ENCODE measurements at regions of chr2 and their contacts with region 1.

Region 1: DNA sequence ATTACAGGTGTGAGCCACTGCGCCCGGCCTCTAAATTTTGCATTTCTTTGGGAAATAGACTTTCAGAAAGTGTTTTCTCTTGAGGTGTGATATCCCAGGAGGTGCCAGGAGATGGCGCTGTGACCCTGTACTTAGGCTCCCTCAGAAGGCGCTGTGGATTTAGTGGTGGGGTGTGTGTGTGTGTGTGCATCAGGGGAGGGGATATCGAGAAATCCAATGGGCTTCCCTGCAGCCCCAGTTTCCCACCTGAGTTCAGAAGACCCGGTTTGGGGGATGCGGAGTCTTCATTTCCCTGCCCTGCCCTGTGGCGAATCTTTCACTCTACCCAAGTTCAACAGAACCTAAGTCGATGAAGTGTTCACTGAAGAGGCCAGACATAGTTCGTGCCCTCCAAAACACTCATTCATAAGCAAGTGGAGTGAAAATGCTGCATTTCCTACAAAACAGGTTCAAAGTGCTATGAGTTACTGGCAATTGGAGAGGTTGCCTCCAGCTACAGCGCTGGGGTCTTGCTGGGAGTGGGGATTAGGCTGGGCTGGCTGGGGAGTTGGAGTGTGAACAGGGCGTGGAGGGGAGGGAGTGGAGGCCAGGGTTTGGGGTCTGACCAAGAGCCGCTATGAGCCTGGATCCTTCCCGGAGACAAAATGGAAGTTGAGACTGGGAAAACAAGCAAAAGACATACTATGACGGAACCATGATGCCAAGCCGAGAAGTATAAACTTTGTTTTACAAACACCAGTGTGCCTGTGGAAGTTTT is 6.5 kb upstream of the WNT6 start:
- DNase-seq: peak; percentile 64
- ATAC-seq: peak; percentile 90
- H3K4me3 Mint-ChIP-seq: no peak overlapping the region
- H3K27ac Mint-ChIP-seq: no peak overlapping the region
- H3K4me1 Mint-ChIP-seq: no peaks in the 10 kb centered on the region
- H3K27me3 Mint-ChIP-seq: peaks cover 53% of the 10 kb centered on the region
- CTCF ChIP-seq: no peak

Region 2: GRCh38 chr2:218671654-218672566 is 181.2 kb before region 1 on chr2 and contains the starts of genes RNF25 and STK36:
- CTCF ChIA-PET with region 1: no interaction called
- POLR2A ChIA-PET with region 1: interaction called, 5 read pairs
- intact Hi-C with region 1: loop called (anchors 5 kb)
- DNase-seq: peak; percentile 66
- ATAC-seq: peak; percentile 95
- H3K4me3 Mint-ChIP-seq: peak within 1 kb of the TSS; percentile 99
- H3K27ac Mint-ChIP-seq: peak within 1 kb of the TSS; percentile 97
- H3K4me1 Mint-ChIP-seq: peaks cover 21% of the 10 kb centered on the region
- H3K27me3 Mint-ChIP-seq: no peaks in the 10 kb centered on the region
- CTCF ChIP-seq: no peak
- total RNA-seq, gene RNF25: 29.7 and 35.1 TPM in 2 replicates
- total RNA-seq, gene STK36: 24.2 and 29.2 TPM in 2 replicates

Region 3: DNA sequence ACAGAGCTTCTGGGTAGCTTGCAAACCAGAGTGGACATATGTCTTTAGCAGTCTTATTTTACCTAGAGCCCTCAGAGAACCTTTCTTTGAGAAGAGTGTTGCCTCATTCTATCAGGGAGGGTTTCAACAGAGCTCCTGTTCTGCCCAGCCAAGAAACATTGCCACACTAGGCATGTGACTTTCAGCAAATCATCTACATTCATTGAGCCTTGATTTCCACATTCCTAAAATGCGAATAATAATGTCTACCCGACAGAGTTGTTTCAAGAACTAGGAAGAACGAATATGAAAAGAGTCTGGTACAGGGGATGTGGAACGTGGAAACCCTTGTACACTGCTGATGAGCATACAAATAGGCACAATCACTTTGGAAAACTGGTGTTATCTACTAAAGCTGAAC is 13.7 kb before region 1 on chr2:
- CTCF ChIA-PET with region 1: no interaction called
- POLR2A ChIA-PET with region 1: no interaction called
- intact Hi-C with region 1: no loop called
- DNase-seq: no peak
- ATAC-seq: no peak
- H3K4me3 Mint-ChIP-seq: no peak overlapping the region
- H3K27ac Mint-ChIP-seq: no peak overlapping the region
- H3K4me1 Mint-ChIP-seq: no peaks in the 10 kb centered on the region
- H3K27me3 Mint-ChIP-seq: peaks cover 39% of the 10 kb centered on the region
- CTCF ChIP-seq: no peak

Region 4: GRCh38 chr2:218898109-218898878 is 45.2 kb after region 1 on chr2:
- CTCF ChIA-PET with region 1: interaction called, 53 read pairs
- POLR2A ChIA-PET with region 1: interaction called, 13 read pairs
- intact Hi-C with region 1: loop called (anchors 1 kb)
- DNase-seq: peak; percentile 88
- ATAC-seq: peak; percentile 22
- H3K4me3 Mint-ChIP-seq: peak overlapping the region; percentile 85
- H3K27ac Mint-ChIP-seq: peak overlapping the region; percentile 84
- H3K4me1 Mint-ChIP-seq: peaks cover 47% of the 10 kb centered on the region
- H3K27me3 Mint-ChIP-seq: peaks cover 22% of the 10 kb centered on the region
- CTCF ChIP-seq: peak; percentile 97

Region 5: DNA sequence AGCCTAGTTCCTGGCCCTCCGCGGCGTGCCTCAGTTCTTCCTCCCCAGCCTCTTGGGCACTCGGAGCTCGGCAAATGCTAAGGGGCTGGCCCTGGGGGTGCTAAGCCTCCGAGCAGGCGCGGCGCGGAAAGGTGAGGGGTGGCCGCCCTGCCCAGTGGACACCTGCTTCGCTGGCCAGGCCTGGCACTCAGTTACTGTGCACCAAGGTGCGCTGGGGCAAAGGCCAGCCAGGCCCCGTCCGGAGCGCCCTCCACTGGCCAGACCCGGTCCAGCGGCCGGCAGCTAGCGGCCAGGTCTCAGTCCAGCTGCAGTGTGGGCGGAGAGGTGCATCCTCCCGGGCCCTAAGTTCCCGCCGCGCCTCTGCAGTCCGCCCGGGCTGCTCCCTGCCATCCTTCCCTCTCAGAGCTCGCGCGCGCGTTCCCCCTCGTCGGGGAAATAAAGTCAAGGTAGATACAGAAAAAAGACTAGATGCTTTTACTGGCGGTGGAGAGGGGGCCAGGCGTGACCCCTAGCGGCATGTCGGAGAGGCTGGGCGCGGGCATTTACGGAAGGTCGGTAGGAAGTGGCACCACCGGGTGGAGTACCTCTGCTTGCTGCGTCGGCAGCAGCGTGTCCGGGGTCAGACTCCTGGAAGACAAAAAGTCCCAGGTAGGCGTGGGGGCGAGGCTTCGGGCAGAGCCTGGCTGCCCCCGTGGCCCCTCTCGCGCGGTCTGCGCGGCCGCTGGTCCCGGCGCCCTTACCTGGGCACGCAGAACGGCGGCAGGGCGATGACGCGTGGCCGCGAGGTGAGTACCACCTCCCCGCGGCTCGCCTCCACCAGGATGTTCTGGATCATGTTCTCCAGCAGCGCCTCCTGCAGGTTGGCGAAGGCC is 149.5 kb after region 1 on chr2:
- CTCF ChIA-PET with region 1: no interaction called
- POLR2A ChIA-PET with region 1: no interaction called
- intact Hi-C with region 1: loop called (anchors 2 kb)
- DNase-seq: no peak
- ATAC-seq: peak; percentile 23
- H3K4me3 Mint-ChIP-seq: peak overlapping the region; percentile 75
- H3K27ac Mint-ChIP-seq: no peak overlapping the region
- H3K4me1 Mint-ChIP-seq: peaks cover 21% of the 10 kb centered on the region
- H3K27me3 Mint-ChIP-seq: peaks cover 59% of the 10 kb centered on the region
- CTCF ChIP-seq: no peak

Region 6: DNA sequence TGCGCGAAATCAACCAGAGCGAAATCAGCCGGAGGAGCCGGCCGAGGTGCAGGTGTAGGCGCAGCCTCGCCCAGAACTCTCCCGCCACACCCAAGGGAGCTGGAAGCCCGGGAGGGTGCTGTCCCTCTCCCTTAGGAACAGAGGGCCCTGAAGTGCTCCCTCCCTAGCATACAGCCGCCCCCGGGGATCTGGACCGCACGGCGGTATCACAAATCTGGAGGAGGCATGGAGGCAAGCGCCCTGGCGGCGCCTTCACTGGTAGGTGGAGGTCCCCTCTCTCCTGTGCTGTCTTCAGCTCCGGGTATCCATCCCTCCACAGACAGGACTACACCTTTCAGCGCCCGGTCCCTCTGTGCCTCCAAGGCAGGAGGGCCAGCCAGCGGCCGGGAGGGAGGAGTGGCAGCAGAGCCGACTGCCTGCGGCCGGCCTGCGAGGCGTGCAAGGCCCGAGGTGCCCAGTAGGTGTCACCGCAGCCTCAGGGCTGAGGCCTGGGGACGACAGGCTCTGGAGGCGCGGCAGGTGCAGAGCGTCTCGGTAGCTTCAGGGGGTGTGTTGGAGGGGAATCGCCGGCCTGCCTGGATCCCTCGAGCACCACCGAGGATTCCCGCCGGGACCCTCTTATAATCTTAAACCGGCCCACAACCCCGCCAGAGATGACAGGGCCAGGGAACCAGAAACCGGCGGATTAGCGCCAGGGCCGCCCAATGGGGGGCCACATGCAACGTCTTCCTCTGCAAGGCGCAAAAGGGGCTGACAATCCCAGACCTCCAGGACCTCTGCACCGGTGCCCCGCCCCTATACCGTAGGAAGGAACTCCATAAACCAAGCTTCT is 204.8 kb after region 1 on chr2:
- CTCF ChIA-PET with region 1: no interaction called
- POLR2A ChIA-PET with region 1: no interaction called
- intact Hi-C with region 1: loop called (anchors 1 kb)
- DNase-seq: peak; percentile 72
- ATAC-seq: peak; percentile 99
- H3K4me3 Mint-ChIP-seq: peak overlapping the region; percentile 57
- H3K27ac Mint-ChIP-seq: no peak overlapping the region
- H3K4me1 Mint-ChIP-seq: peaks cover 32% of the 10 kb centered on the region
- H3K27me3 Mint-ChIP-seq: peaks cover 58% of the 10 kb centered on the region
- CTCF ChIP-seq: peak; percentile 47

Region 7: GRCh38 chr2:219155054-219155644 is 302.1 kb after region 1 on chr2:
- CTCF ChIA-PET with region 1: interaction called, 7 read pairs
- POLR2A ChIA-PET with region 1: no interaction called
- intact Hi-C with region 1: loop called (anchors 1 kb)
- DNase-seq: no peak
- ATAC-seq: peak; percentile 27
- H3K4me3 Mint-ChIP-seq: no peak overlapping the region
- H3K27ac Mint-ChIP-seq: no peak overlapping the region
- H3K4me1 Mint-ChIP-seq: peaks cover 7% of the 10 kb centered on the region
- H3K27me3 Mint-ChIP-seq: no peaks in the 10 kb centered on the region
- CTCF ChIP-seq: peak; percentile 77

Measured in activated B cell treated with CpG ODN at 0.5 μM for 24 hours (primary cell).